Activated CD8-positive, alpha-beta memory T cell treated with anti-CD3 and anti-CD28 coated beads, Interleukin-2, amount 10 ng/mL, durations not matched to agents 7 days and 5 days (primary cell): ENCODE measurements at regions of chr6 and their contacts with region 1.

Region 1: DNA sequence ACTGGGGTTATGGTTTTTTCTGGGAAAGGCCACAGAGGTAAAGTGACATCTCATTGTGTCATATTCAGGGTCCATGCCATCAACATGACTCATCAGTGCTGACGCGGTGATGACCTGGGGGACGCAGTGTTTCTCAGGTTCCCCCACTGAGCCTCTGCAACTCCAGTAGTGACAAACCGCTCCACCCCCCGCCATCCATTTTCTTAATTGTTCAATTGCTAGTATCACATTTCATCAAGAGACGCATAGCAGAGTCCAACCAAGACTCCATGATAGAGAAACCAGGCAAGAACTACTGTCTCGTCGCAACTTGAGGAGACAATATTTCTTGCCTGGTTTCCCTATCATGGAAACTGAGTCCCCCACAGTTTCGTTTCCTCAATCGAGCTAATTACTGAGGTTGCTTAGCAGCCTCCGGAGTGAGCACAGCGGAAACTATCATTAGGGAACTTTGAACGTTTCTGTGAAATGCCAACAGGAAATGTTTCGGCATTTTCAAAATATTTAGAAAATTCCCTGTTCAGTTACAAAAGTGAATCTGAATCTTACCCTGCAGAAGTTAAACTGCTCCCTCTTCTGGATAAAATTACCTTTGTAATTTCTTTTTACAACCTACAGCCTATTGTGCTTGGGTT is 12.2 kb upstream of the SERPINB1 start:
- DNase-seq: peak; percentile 95
- ATAC-seq: peak; percentile 62
- H3K4me3 Mint-ChIP-seq: peak overlapping the region; percentile 64
- H3K27ac Mint-ChIP-seq: peak overlapping the region; percentile 94
- H3K4me1 Mint-ChIP-seq: peaks cover 74% of the 10 kb centered on the region
- H3K27me3 Mint-ChIP-seq: no peaks in the 10 kb centered on the region

Region 2: DNA sequence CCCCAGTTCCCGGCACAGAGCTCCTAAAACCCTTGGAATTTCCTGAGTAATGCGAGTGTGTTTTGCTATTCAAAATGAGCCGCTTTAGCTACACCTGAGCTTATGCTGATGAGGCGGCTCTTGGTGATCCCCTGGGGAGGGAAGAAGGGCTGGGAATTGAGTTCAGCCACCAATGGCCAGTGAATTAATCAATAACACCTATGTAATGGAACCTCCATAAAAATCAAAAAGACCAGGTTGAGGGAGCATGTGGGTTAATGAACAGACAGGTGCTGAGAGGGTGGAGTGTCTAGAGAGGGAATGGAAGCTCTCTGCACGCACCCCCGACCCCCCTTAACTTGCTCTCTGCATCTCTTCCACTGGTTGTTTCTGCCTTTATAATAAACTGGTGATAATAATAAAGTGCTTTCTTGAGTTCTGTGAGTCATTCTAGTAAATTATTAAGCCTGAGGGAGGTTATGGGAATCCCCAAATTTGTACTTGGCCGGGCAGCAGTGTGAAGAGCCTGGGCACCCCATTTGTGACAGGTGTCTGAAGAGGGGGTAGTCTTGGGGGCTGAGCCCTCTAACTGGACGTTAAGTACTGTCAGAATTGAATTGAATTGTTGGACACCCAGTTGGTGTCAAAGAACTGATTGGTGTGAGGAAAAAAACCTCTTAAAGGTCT is 12.4 kb after region 1 on chr6:
- CTCF ChIA-PET with region 1: interaction called, 13 read pairs
- DNase-seq: peak; percentile 38
- ATAC-seq: no peak
- H3K4me3 Mint-ChIP-seq: no peak overlapping the region
- H3K27ac Mint-ChIP-seq: no peak overlapping the region
- H3K4me1 Mint-ChIP-seq: peaks cover 64% of the 10 kb centered on the region
- H3K27me3 Mint-ChIP-seq: no peaks in the 10 kb centered on the region

Region 3: GRCh38 chr6:2876210-2877056 is 22.6 kb after region 1 on chr6:
- CTCF ChIA-PET with region 1: interaction called, 14 read pairs
- DNase-seq: no peak
- ATAC-seq: peak; percentile 45
- H3K4me3 Mint-ChIP-seq: peak overlapping the region; percentile 76
- H3K27ac Mint-ChIP-seq: peak overlapping the region; percentile 92
- H3K4me1 Mint-ChIP-seq: peaks cover 77% of the 10 kb centered on the region
- H3K27me3 Mint-ChIP-seq: no peaks in the 10 kb centered on the region

Region 4: GRCh38 chr6:2911171-2911570 is 57.3 kb after region 1 on chr6:
- CTCF ChIA-PET with region 1: interaction called, 96 read pairs
- DNase-seq: no peak
- ATAC-seq: no peak
- H3K4me3 Mint-ChIP-seq: no peak overlapping the region
- H3K27ac Mint-ChIP-seq: no peak overlapping the region
- H3K4me1 Mint-ChIP-seq: peaks cover 24% of the 10 kb centered on the region
- H3K27me3 Mint-ChIP-seq: no peaks in the 10 kb centered on the region